ENCODE measurements at regions of chr2 and their contacts with region 1.

Region 1: GRCh38 chr2:42095923-42096408 is 48.1 kb downstream of the PKDCC start:
- DNase-seq: peak in 1 of 2 donors; percentile 88
- H3K4me3 ChIP-seq: no peak overlapping the region
- H3K27ac ChIP-seq: no peak overlapping the region
- H3K4me1 ChIP-seq: peaks cover 0 to 18% of the 10 kb centered on the region in 2 donors
- H3K27me3 ChIP-seq: no peaks in the 10 kb centered on the region
- CTCF ChIP-seq: peak; percentile 67 to 88 (median 87)

Region 2: GRCh38 chr2:42132966-42133641 is 37.1 kb after region 1 on chr2:
- intact Hi-C with region 1: no loop called
- DNase-seq: peak; percentile 82 to 95
- H3K4me3 ChIP-seq: peak overlapping the region; percentile 31 to 56
- H3K27ac ChIP-seq: peak overlapping the region; percentile 75 to 81
- H3K4me1 ChIP-seq: peaks cover 0 to 20% of the 10 kb centered on the region in 2 donors
- H3K27me3 ChIP-seq: no peaks in the 10 kb centered on the region
- CTCF ChIP-seq: no peak

Region 3: DNA sequence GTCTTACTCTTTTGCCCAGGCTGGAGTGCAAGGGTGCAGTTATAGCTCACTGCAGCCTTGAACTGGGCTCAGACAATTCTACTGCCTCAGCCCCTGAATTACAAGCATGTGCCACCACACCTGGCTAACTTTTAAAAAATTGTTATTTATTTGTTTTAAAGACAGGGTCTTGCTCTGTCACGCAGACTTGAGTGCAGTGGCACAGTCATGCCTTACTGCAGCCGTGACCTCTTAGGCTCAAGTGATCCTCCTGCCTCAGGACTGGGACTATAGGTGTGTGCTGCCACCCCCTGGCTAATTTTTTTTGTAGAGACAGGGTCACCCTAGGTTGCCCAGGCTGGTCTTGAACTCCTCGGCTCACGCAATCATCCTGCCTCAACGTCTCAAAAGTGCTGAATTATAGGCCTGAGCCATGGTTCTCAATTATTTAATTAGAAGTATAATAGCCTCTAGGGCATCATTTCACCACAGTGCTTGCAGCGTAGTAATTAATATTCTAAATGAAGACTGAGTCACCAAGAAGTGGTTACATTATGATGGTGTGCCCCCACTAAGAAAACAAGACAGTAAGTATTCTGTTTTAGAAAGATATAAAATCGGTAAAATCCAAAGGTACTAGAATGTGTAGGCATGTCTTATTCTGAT is 142.8 kb after region 1 on chr2:
- intact Hi-C with region 1: loop called (anchors 1 kb)
- DNase-seq: no peak
- H3K4me3 ChIP-seq: no peak overlapping the region
- H3K27ac ChIP-seq: no peak overlapping the region
- H3K4me1 ChIP-seq: no peaks in the 10 kb centered on the region
- H3K27me3 ChIP-seq: no peaks in the 10 kb centered on the region
- CTCF ChIP-seq: peak; percentile 19 to 54 (median 28)

Region 4: DNA sequence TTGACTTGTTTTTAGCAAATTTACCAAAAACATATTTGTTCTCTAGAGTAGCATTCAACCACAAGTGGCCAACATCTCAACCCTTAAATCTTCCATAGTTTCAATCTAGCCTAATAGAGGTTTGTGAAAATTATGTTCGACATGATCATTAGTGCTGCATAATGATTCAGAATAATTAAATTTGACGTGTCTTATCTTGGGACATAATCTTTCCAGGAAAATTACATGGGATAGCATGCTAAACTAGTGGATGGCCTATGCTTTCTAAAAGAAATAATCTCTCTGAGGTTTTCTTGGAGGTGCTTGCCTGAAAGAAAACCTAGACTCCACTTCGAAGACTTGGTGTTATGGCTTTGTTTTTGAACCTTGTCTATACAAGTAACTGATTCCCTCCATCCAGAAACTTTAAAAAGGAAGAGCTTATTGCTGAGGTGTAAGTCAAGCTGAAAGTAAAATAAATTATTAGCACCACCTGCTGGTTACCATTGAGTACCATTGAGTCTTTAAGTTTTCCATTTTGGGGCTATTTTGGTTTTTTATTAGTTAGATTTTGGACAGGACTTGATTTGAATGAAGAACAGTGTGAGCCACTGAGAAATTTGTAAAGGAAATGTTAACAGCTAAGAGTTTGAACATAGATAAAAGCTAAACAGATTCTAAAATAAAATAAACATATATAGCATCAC is 232.3 kb after region 1 on chr2:
- intact Hi-C with region 1: loop called (anchors 1 kb)
- DNase-seq: no peak
- H3K4me3 ChIP-seq: no peak overlapping the region
- H3K27ac ChIP-seq: no peak overlapping the region
- H3K4me1 ChIP-seq: peaks cover 0 to 5% of the 10 kb centered on the region in 2 donors
- H3K27me3 ChIP-seq: no peaks in the 10 kb centered on the region
- CTCF ChIP-seq: peak; percentile 22 to 50 (median 47)

Region 5: DNA sequence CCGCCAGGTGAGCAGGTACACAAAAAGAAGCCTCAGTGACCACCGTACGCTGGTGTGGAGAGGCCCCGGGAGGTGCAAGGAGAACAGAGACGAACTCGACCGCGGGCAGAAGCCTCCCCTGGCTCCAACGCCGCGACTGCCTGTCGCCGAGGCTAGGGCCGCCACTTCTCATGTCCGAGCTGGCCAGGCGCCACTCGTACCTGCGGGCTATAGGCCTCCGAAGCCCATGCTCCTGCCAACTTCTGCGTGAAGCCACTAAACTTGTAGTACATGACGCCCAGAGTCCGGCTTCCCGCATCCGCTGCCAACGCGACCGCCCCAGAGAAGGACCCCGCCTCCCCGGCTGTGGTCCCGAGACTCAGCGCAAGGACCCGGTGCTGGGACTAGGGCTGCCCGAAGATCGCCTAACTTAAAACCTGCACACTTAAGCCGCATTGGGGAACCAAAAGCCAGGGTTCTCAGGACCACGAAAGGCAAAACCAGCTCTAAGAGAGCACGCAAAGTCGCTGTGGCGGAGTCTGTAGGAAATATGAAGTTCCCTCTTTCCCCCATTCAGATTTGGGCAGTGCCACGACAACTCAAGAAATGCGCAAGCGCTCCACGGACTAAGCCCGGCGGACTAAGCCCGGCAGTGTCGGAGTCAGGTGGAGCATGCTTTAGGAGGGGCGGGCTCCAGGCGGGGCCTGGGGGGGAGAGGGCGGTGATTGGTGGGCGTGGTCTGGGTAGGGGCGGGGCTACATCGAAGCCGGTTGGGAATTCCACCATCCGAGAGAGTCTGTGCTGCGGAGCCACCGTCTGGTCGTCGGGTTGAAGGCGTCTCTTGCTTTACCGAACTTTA is 265.1 kb after region 1 on chr2 and contains the start of gene COX7A2L:
- intact Hi-C with region 1: loop called (anchors 1 kb)
- DNase-seq: peak; percentile 83 to 97
- H3K4me3 ChIP-seq: peak within 1 kb of the TSS; percentile 61 to 97
- H3K27ac ChIP-seq: peak within 1 kb of the TSS; percentile 82 to 95
- H3K4me1 ChIP-seq: peaks cover 0 to 23% of the 10 kb centered on the region in 2 donors
- H3K27me3 ChIP-seq: no peaks in the 10 kb centered on the region
- CTCF ChIP-seq: peak; percentile 3 to 56 (median 36)
- total RNA-seq, gene COX7A2L: 35.2 TPM